Activated B cell treated with CpG ODN at 0.5 μM for 24 hours (primary cell): ENCODE measurements at regions of chr7 and their contacts with region 1.

Region 1: DNA sequence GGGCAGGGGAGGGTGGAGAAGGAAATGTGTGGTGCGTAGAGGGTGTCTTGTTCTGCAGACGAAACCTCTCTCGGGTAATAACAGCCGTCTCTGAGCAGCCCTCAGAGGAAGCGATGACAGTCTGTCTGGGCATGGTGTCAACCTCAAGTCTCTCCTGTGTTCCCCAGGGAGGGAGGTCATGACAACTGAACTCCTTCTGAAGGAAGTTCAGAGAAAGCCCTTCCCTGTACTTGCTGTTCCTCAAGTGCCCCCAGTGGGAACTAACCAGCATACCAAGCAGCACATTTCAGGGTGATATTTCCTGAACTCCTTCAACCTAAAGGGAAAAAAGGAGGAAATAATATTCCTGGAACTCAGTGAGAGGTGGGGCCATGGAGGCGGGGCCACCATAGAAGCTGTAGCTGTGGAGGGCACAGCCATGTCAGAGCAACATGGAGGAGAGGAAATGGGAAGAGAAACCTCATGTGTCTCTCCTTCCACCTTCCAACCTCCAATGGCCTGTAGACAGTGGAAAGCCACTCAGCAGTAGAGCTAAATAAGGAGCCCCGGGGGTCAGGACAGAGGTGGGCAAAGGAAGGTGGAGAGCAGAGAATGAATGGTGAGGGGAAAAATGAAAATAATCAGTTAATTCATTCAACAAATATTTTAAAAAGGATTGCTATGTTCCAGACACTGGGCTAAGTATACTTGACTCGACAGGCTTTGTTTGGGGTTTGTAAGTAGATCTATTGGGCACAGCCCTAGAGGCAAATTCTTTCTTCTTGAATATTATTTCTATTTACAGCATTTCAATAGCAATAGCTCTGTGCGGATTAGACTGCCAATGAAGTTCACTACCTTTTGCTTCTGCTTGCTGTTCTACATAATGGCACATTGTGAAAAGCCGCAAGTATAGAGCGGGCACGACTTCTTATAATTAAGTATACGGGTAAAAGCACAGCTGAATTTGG is 61.0 kb upstream of the AOAH start:
- DNase-seq: peak; percentile 32
- ATAC-seq: peak; percentile 99
- H3K4me3 Mint-ChIP-seq: peak overlapping the region; percentile 3
- H3K27ac Mint-ChIP-seq: peak overlapping the region; percentile 1
- H3K4me1 Mint-ChIP-seq: peaks cover 17% of the 10 kb centered on the region
- H3K27me3 Mint-ChIP-seq: peaks cover 5% of the 10 kb centered on the region
- CTCF ChIP-seq: no peak

Region 2: GRCh38 chr7:36670585-36671431 is 114.5 kb before region 1 on chr7:
- CTCF ChIA-PET with region 1: no interaction called
- POLR2A ChIA-PET with region 1: no interaction called
- intact Hi-C with region 1: loop called (anchors 10 kb)
- DNase-seq: no peak
- ATAC-seq: peak; percentile 72
- H3K4me3 Mint-ChIP-seq: no peak overlapping the region
- H3K27ac Mint-ChIP-seq: no peak overlapping the region
- H3K4me1 Mint-ChIP-seq: no peaks in the 10 kb centered on the region
- H3K27me3 Mint-ChIP-seq: no peaks in the 10 kb centered on the region
- CTCF ChIP-seq: no peak

Region 3: GRCh38 chr7:36760856-36761762 is 24.2 kb before region 1 on chr7:
- CTCF ChIA-PET with region 1: no interaction called
- POLR2A ChIA-PET with region 1: no interaction called
- intact Hi-C with region 1: loop called (anchors 2 kb)
- DNase-seq: no peak
- ATAC-seq: no peak
- H3K4me3 Mint-ChIP-seq: no peak overlapping the region
- H3K27ac Mint-ChIP-seq: no peak overlapping the region
- H3K4me1 Mint-ChIP-seq: peaks cover 11% of the 10 kb centered on the region
- H3K27me3 Mint-ChIP-seq: no peaks in the 10 kb centered on the region
- CTCF ChIP-seq: no peak

Region 4: DNA sequence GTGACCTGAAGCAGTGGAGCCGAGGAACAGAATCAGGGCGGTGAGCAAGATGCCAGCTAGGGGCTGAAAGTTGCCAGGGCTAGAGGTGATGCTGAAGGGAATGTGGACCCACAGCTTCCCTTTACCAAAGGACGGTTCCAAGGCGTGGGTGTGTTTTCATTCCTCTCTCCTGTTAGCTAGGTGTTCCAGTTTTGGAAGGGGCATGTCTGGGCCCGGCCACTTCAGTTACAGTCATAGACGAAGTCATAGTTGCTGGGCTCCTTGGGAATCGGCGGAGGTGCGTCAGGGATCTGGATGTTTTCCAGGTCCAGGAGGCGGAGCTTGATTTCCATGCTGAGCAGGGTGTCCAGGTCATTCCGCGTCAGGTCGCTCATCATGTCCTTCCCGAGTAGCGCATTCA is 70.1 kb after region 1 on chr7:
- CTCF ChIA-PET with region 1: no interaction called
- POLR2A ChIA-PET with region 1: no interaction called
- intact Hi-C with region 1: no loop called
- DNase-seq: no peak
- ATAC-seq: no peak
- H3K4me3 Mint-ChIP-seq: no peak overlapping the region
- H3K27ac Mint-ChIP-seq: no peak overlapping the region
- H3K4me1 Mint-ChIP-seq: no peaks in the 10 kb centered on the region
- H3K27me3 Mint-ChIP-seq: no peaks in the 10 kb centered on the region
- CTCF ChIP-seq: no peak